Calu3 (cell line): ENCODE measurements at regions of chr16 and their contacts with region 1.

Region 1: GRCh38 chr16:72723781-72724180 is 324.1 kb downstream of the ZFHX3 start:
- DNase-seq: no peak
- H3K4me3 Mint-ChIP-seq: no peak overlapping the region
- H3K27ac Mint-ChIP-seq: no peak overlapping the region
- H3K4me1 Mint-ChIP-seq: no peaks in the 10 kb centered on the region
- H3K27me3 Mint-ChIP-seq: no peaks in the 10 kb centered on the region
- CTCF ChIP-seq: no peak

Region 2: DNA sequence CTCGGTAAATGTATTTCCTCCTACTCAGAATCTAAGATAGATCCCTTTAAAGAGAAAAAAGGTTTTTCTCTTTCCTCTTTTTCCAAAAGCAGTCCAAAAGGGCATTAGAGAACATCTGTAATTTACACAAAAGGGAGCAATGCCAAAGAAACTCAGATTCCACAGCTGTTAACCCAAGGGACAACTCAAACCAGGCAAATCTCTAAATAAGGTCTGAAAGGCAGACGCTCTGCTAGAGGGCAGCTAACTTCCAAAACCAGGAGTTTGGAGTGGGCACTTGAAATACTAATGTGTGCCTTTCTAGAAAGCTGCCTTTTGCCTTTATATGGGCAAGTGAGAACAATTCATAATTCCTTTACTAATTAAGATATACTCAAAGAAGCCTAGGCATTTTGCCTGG is 111.5 kb before region 1 on chr16:
- CTCF ChIA-PET with region 1: interaction called, 12 read pairs
- intact Hi-C with region 1: no loop called
- DNase-seq: no peak
- H3K4me3 Mint-ChIP-seq: no peak overlapping the region
- H3K27ac Mint-ChIP-seq: no peak overlapping the region
- H3K4me1 Mint-ChIP-seq: no peaks in the 10 kb centered on the region
- H3K27me3 Mint-ChIP-seq: no peaks in the 10 kb centered on the region
- CTCF ChIP-seq: no peak

Region 3: DNA sequence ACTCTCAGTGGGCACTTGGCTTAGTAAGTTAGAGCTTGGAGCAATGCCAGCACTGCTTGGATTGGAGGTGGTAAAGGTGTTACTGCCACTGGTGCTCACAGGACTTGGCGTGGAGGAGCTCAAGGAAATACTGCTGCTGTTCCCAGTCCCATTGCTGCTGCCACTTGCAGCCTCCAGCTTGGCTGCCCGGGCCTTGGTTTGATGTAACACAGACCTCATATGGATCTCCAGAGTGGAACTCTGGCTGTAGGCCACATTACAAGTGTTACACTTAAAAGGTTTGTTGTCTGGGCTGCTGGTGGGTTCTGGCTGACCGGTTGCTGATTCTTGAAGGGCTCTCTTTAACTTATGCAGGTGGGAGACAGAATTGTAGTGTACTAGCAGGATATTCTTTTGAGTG is 73.8 kb after region 1 on chr16:
- CTCF ChIA-PET with region 1: no interaction called
- intact Hi-C with region 1: no loop called
- DNase-seq: no peak
- H3K4me3 Mint-ChIP-seq: no peak overlapping the region
- H3K27ac Mint-ChIP-seq: no peak overlapping the region
- H3K4me1 Mint-ChIP-seq: no peaks in the 10 kb centered on the region
- H3K27me3 Mint-ChIP-seq: no peaks in the 10 kb centered on the region
- CTCF ChIP-seq: no peak